Vagina (tissue), 2 donors: ENCODE measurements at regions of chr9 and their contacts with region 1.

Region 1: DNA sequence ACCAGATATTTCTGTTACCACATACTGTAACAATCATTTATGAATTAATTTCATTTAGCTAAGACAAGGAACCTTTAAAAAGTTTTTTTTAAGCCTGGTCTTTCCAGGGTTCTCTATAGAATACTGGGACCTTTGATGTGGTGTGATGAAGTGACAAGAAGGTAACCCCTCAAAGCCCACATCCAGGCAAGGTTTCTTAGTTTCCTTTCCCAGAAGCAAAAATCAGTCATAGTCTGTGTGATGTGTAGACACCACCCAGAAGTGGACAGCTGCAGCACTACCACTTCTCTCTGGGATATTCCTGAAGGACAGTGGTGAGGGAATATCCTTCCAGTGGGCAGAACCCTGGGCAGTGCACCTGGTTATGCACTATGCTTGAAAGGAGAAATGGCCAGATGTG is 115.6 kb downstream of the TTC39B start:
- DNase-seq: no peak
- H3K4me3 ChIP-seq: no peak overlapping the region
- H3K27ac ChIP-seq: no peak overlapping the region
- H3K4me1 ChIP-seq: no peaks in the 10 kb centered on the region
- H3K27me3 ChIP-seq: no peaks in the 10 kb centered on the region
- CTCF ChIP-seq: no peak
- POLR2A ChIP-seq: no peak

Region 2: GRCh38 chr9:14961372-14962068 is 229.9 kb before region 1 on chr9:
- intact Hi-C with region 1: no loop called
- DNase-seq: no peak
- H3K4me3 ChIP-seq: no peak overlapping the region
- H3K27ac ChIP-seq: no peak overlapping the region
- H3K4me1 ChIP-seq: peaks cover 6% of the 10 kb centered on the region
- H3K27me3 ChIP-seq: no peaks in the 10 kb centered on the region
- CTCF ChIP-seq: no peak
- POLR2A ChIP-seq: no peak

Region 3: GRCh38 chr9:15306757-15307534 is 115.6 kb after region 1 on chr9 and contains the start of gene TTC39B:
- intact Hi-C with region 1: no loop called
- DNase-seq: peak in 1 of 2 donors; percentile 93
- H3K4me3 ChIP-seq: peak within 1 kb of the TSS; percentile 68 to 78
- H3K27ac ChIP-seq: peak within 1 kb of the TSS; percentile 86
- H3K4me1 ChIP-seq: peaks cover 9% of the 10 kb centered on the region
- H3K27me3 ChIP-seq: no peaks in the 10 kb centered on the region
- CTCF ChIP-seq: peak in 1 of 3 experiments; percentile 23
- POLR2A ChIP-seq: peak in 1 of 2 donors; percentile 53
- total RNA-seq, gene TTC39B: 13.3 TPM

Region 4: GRCh38 chr9:17134396-17135294 is 1943.3 kb after region 1 on chr9 and contains the start of gene CNTLN:
- intact Hi-C with region 1: loop called (anchors 10 kb)
- DNase-seq: peak; percentile 92 to 98
- H3K4me3 ChIP-seq: peak within 1 kb of the TSS; percentile 72 to 98
- H3K27ac ChIP-seq: peak within 1 kb of the TSS; percentile 84
- H3K4me1 ChIP-seq: peaks cover 22% of the 10 kb centered on the region
- H3K27me3 ChIP-seq: no peaks in the 10 kb centered on the region
- CTCF ChIP-seq: peak in 1 of 3 experiments; percentile 1
- POLR2A ChIP-seq: peak in 1 of 2 donors; percentile 45
- total RNA-seq, gene CNTLN: 13.3 TPM